ENCODE measurements at regions of chr11 and their contacts with region 1.

Region 1: DNA sequence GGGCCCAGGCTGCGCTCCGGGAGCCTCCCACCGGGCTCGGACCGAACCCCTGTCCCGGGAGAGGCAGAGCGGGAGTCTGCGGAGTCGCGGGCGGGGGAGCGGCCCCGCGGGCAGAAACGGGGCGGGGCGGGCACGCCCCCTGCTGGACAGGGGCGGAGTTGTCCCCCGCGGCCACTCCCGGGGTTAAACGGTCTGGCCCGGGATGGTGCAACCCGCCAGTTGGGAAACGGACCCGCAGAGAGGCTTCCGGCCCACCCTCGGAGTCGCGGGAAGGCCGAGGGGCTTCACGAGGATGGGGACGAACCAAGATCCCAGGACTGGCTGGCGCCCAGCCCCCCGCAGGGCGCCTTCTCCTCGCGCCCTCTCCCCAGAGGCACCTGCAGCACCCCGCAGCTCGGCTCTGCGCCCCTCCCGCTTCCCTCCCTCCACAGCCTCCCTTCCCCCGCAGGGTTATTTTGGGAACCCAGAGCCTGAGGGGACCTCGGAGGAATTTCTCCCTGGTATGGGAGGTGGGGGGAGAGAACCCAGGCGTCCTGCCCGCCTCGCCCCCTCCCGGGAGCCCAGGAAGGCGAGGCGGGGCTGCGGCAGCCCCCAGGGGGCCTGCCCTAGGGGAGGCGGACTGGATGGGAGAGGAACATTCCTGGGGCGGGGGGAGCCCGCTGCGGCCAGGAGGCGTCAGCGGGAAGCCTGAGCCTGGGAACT is 902 bp downstream of the RASGRP2 start:
- DNase-seq: peak; percentile 81 to 93 (median 86)
- ATAC-seq: peak; percentile 7 to 47 (median 42)
- H3K4me3 ChIP-seq: peak overlapping the region; percentile 32 to 88 (median 60)
- H3K27ac ChIP-seq: peak overlapping the region; percentile 76 to 98 (median 94)
- H3K4me1 ChIP-seq: peaks cover 4 to 49% (median 28%) of the 10 kb centered on the region in 12 donors
- H3K27me3 ChIP-seq: no peaks in the 10 kb centered on the region
- CTCF ChIP-seq: peak; percentile 74 to 94 (median 88)
- POLR2A ChIP-seq: peak in 1 of 2 donors; percentile 55

Region 2: GRCh38 chr11:64688534-64688982 is 54.5 kb before region 1 on chr11:
- intact Hi-C with region 1: loop called in 1 of 10 experiments (anchors 2 kb)
- DNase-seq: peak; percentile 87 to 94 (median 90)
- ATAC-seq: peak; percentile 92 to 95 (median 94)
- H3K4me3 ChIP-seq: peak overlapping the region in 10 of 12 donors; percentile 27 to 60 (median 47)
- H3K27ac ChIP-seq: peak overlapping the region; percentile 6 to 80 (median 68)
- H3K4me1 ChIP-seq: peaks cover 0 to 26% (median 12%) of the 10 kb centered on the region in 12 donors
- H3K27me3 ChIP-seq: peaks cover 0 to 13% (median 3%) of the 10 kb centered on the region in 9 donors
- CTCF ChIP-seq: peak; percentile 90 to 96 (median 94)
- POLR2A ChIP-seq: no peak

Region 3: GRCh38 chr11:64767344-64768299 is 24.6 kb after region 1 on chr11:
- intact Hi-C with region 1: loop called in 2 of 10 experiments (anchors 2 kb)
- DNase-seq: peak in 4 of 5 donors; percentile 64 to 76 (median 70)
- ATAC-seq: peak in 3 of 4 donors; percentile 7 to 34 (median 23)
- H3K4me3 ChIP-seq: no peak overlapping the region
- H3K27ac ChIP-seq: peak overlapping the region in 9 of 12 donors; percentile 3 to 64 (median 46)
- H3K4me1 ChIP-seq: peaks cover 10 to 72% (median 42%) of the 10 kb centered on the region in 12 donors
- H3K27me3 ChIP-seq: no peaks in the 10 kb centered on the region
- CTCF ChIP-seq: peak; percentile 64 to 89 (median 76)
- POLR2A ChIP-seq: no peak

Region 4: GRCh38 chr11:64778508-64779346 is 35.7 kb after region 1 on chr11 and contains the start of gene SF1:
- intact Hi-C with region 1: loop called in 5 of 10 experiments (anchors 2 to 5 kb)
- DNase-seq: peak; percentile 98 to 100 (median 99)
- ATAC-seq: peak; percentile 93 to 97 (median 96)
- H3K4me3 ChIP-seq: peak within 1 kb of the TSS; percentile 77 to 99 (median 92)
- H3K27ac ChIP-seq: peak within 1 kb of the TSS; percentile 98 to 100 (median 99)
- H3K4me1 ChIP-seq: peaks cover 0 to 46% (median 39%) of the 10 kb centered on the region in 12 donors
- H3K27me3 ChIP-seq: no peaks in the 10 kb centered on the region
- CTCF ChIP-seq: peak in 7 of 12 donors; percentile 6 to 53 (median 41)
- POLR2A ChIP-seq: peak; percentile 90 to 97
- total RNA-seq, gene SF1: 103 to 349 (median 157) TPM

Region 5: GRCh38 chr11:64960719-64961118 is 217.7 kb after region 1 on chr11:
- intact Hi-C with region 1: no loop called
- DNase-seq: no peak
- ATAC-seq: no peak
- H3K4me3 ChIP-seq: no peak overlapping the region
- H3K27ac ChIP-seq: no peak overlapping the region
- H3K4me1 ChIP-seq: no peaks in the 10 kb centered on the region
- H3K27me3 ChIP-seq: peaks cover 0 to 3% (median 0%) of the 10 kb centered on the region in 9 donors
- CTCF ChIP-seq: no peak
- POLR2A ChIP-seq: no peak

Measured in heart left ventricle (tissue), 16 donors.